CD4-positive, alpha-beta T cell (primary cell): ENCODE measurements at regions of chr11 and their contacts with region 1.

Region 1: GRCh38 chr11:75867775-75868374 is 52.9 kb downstream of the UVRAG start:
- DNase-seq: peak in 11 of 14 experiments; percentile 1 to 80 (median 31)
- ATAC-seq: peak; percentile 59
- H3K4me3 ChIP-seq: no peak overlapping the region
- H3K4me3 Mint-ChIP-seq: no peak overlapping the region
- H3K27ac ChIP-seq: no peak overlapping the region
- H3K27ac Mint-ChIP-seq: no peak overlapping the region
- H3K4me1 ChIP-seq: peaks cover 3% of the 10 kb centered on the region
- H3K4me1 Mint-ChIP-seq: peaks cover 7% of the 10 kb centered on the region
- H3K27me3 ChIP-seq: no peaks in the 10 kb centered on the region
- H3K27me3 Mint-ChIP-seq: no peaks in the 10 kb centered on the region
- CTCF ChIP-seq: peak; percentile 89

Region 2: DNA sequence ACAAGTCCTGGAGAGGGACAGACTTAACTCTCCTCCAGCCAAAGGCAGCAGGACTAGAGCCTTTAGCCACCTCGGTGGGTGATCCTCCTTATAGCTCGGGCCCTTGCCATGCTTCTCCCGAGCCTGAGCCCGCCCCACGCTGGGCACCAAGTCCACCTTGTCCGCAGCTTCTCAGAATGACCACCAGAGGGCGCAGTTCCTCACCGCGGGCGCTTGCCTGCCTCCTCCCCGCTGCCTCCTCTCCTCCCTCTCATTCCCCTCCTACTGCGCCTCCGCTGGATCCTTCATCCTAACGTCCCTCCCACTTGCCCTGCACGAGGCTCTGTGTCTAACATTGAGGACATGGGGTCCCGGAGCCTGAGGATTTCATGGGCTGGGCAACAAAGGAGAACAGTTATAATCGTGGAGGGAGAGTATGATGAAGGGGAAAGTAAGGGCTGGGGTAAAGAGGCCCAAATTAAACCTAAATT is 161.6 kb before region 1 on chr11:
- CTCF ChIA-PET with region 1: no interaction called
- POLR2A ChIA-PET with region 1: no interaction called
- intact Hi-C with region 1: loop called in 1 of 2 experiments (anchors 5 kb)
- DNase-seq: peak; percentile 34 to 85 (median 51)
- ATAC-seq: peak; percentile 72
- H3K4me3 ChIP-seq: no peak overlapping the region
- H3K4me3 Mint-ChIP-seq: no peak overlapping the region
- H3K27ac ChIP-seq: no peak overlapping the region
- H3K27ac Mint-ChIP-seq: no peak overlapping the region
- H3K4me1 ChIP-seq: peaks cover 8% of the 10 kb centered on the region
- H3K4me1 Mint-ChIP-seq: peaks cover 8% of the 10 kb centered on the region
- H3K27me3 ChIP-seq: peaks cover 0 to 3% of the 10 kb centered on the region in 2 experiments
- H3K27me3 Mint-ChIP-seq: no peaks in the 10 kb centered on the region
- CTCF ChIP-seq: peak; percentile 96

Region 3: GRCh38 chr11:75721855-75722668 is 145.8 kb before region 1 on chr11:
- CTCF ChIA-PET with region 1: no interaction called
- POLR2A ChIA-PET with region 1: no interaction called
- intact Hi-C with region 1: loop called (anchors 2 to 10 kb)
- DNase-seq: peak in 1 of 14 experiments; percentile 25
- ATAC-seq: no peak
- H3K4me3 ChIP-seq: no peak overlapping the region
- H3K4me3 Mint-ChIP-seq: no peak overlapping the region
- H3K27ac ChIP-seq: no peak overlapping the region
- H3K27ac Mint-ChIP-seq: no peak overlapping the region
- H3K4me1 ChIP-seq: no peaks in the 10 kb centered on the region
- H3K4me1 Mint-ChIP-seq: no peaks in the 10 kb centered on the region
- H3K27me3 ChIP-seq: no peaks in the 10 kb centered on the region
- H3K27me3 Mint-ChIP-seq: no peaks in the 10 kb centered on the region
- CTCF ChIP-seq: no peak

Region 4: DNA sequence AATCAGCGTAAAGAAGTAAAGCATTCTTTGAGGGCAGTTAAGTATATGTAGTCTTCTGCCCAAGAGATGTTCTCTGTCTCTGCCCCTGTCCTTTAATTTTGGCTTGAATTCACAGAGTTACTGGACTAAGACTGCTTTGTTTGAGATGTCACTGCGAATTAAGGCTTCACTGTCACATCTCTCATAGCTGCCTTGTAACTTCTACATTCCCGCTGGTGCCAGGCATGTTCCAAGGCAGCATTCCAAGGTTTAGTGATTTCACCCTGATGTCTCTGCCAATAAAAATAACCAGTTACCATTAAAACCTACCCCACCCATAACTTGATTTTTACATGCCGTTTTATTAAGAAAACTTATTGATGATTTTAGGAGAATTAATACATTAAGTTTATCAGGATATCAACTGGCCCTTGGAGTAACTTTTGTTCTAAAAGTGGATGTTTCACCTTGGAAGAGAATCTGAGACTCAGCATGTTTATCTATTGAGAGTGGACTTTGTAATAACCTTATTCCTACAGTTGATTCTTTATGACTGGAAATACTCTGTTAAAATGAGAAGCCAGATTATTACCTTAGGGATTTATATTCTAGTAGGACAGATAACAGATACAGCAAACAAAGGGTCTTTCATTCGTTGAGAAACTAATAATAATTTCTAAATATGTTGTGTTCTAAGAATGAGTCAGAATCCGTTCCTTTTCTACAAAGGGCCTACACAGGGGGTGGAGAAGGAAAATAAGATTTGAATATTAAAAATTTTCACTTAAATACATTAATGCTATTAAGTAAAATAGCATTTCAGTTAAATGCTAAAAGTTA is 57.3 kb after region 1 on chr11:
- CTCF ChIA-PET with region 1: no interaction called
- POLR2A ChIA-PET with region 1: no interaction called
- intact Hi-C with region 1: no loop called
- DNase-seq: no peak
- ATAC-seq: no peak
- H3K4me3 ChIP-seq: no peak overlapping the region
- H3K4me3 Mint-ChIP-seq: no peak overlapping the region
- H3K27ac ChIP-seq: no peak overlapping the region
- H3K27ac Mint-ChIP-seq: no peak overlapping the region
- H3K4me1 ChIP-seq: no peaks in the 10 kb centered on the region
- H3K4me1 Mint-ChIP-seq: peaks cover 22% of the 10 kb centered on the region
- H3K27me3 ChIP-seq: no peaks in the 10 kb centered on the region
- H3K27me3 Mint-ChIP-seq: no peaks in the 10 kb centered on the region
- CTCF ChIP-seq: no peak